IMR-90 (cell line): ENCODE measurements at regions of chr3 and their contacts with region 1.

Region 1: GRCh38 chr3:120417272-120417911 is 33.4 kb downstream of the FSTL1 start:
- DNase-seq: peak; percentile 99
- ATAC-seq: peak; percentile 90
- H3K4me3 ChIP-seq: no peak overlapping the region
- H3K27ac ChIP-seq: peak overlapping the region; percentile 79; the same call in 1 of the 2 replicates
- H3K4me1 ChIP-seq: peaks cover 29% of the 10 kb centered on the region
- H3K27me3 ChIP-seq: no peaks in the 10 kb centered on the region
- CTCF ChIP-seq: peak; percentile 87
- POLR2A ChIP-seq: no peak
- RAD21 ChIP-seq: peak; percentile 66

Region 2: GRCh38 chr3:119891944-119892721 is 525.3 kb before region 1 on chr3:
- CTCF ChIA-PET with region 1: no interaction called
- POLR2A ChIA-PET with region 1: no interaction called
- dilution Hi-C with region 1: no loop called
- in situ Hi-C with region 1: no loop called
- intact Hi-C with region 1: loop called (anchors 1 kb)
- DNase-seq: peak; percentile 71
- ATAC-seq: peak; percentile 70; the same call in 1 of the 2 replicates
- H3K4me3 ChIP-seq: no peak overlapping the region
- H3K27ac ChIP-seq: no peak overlapping the region
- H3K4me1 ChIP-seq: no peaks in the 10 kb centered on the region
- H3K27me3 ChIP-seq: no peaks in the 10 kb centered on the region
- CTCF ChIP-seq: peak; percentile 77
- POLR2A ChIP-seq: no peak
- RAD21 ChIP-seq: peak; percentile 89

Region 3: DNA sequence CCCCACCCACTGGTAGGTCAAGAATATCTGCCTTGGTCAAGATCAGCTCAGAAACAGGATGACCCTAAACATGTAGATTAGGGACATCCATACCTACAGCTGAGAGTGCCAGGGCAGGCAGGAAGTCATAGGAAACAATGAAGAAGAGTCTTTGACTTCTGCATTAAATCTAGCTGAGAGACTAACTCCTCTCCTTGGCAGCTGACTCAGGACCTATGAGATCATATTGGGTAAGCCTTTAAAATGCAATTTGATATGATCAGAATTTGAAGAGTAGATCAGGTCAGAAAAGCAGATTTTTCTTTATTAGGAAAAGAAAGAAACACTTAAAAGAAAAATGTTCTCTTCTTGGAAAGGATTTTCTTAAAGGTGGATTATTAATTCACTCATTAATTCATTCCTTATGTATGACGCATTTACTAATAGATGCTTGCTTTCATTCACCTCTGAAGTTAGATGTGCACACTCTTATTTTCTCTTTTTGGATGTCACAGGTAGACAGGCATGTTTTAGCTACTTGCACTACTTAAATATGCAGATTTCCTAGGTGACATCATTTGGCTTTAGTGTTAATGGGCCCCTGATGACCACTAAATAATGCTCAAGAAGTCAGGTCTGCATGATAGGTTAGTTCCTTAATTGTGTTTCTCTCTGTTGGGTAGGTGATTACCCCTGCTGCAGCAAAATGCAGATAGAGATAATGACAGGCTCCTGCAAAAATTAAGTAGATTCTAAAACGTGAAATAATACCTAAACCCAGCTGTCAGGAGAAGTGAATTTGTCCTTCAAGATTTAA is 287.5 kb before region 1 on chr3:
- CTCF ChIA-PET with region 1: no interaction called
- POLR2A ChIA-PET with region 1: no interaction called
- dilution Hi-C with region 1: no loop called
- in situ Hi-C with region 1: no loop called
- intact Hi-C with region 1: no loop called
- DNase-seq: peak; percentile 57
- ATAC-seq: peak; percentile 48; the same call in 1 of the 2 replicates
- H3K4me3 ChIP-seq: no peak overlapping the region
- H3K27ac ChIP-seq: no peak overlapping the region
- H3K4me1 ChIP-seq: no peaks in the 10 kb centered on the region
- H3K27me3 ChIP-seq: no peaks in the 10 kb centered on the region
- CTCF ChIP-seq: no peak
- POLR2A ChIP-seq: no peak
- RAD21 ChIP-seq: no peak

Region 4: GRCh38 chr3:120245386-120245785 is 172.0 kb before region 1 on chr3:
- CTCF ChIA-PET with region 1: interaction called, 22 read pairs
- POLR2A ChIA-PET with region 1: no interaction called
- dilution Hi-C with region 1: no loop called
- in situ Hi-C with region 1: no loop called
- intact Hi-C with region 1: loop called (anchors 1 kb)
- DNase-seq: no peak
- ATAC-seq: no peak
- H3K4me3 ChIP-seq: no peak overlapping the region
- H3K27ac ChIP-seq: no peak overlapping the region
- H3K4me1 ChIP-seq: no peaks in the 10 kb centered on the region; the same call in 1 of the 2 replicates
- H3K27me3 ChIP-seq: peaks cover 12% of the 10 kb centered on the region
- CTCF ChIP-seq: no peak
- POLR2A ChIP-seq: no peak
- RAD21 ChIP-seq: no peak

Region 5: GRCh38 chr3:120341658-120342346 is 75.6 kb before region 1 on chr3:
- CTCF ChIA-PET with region 1: no interaction called
- POLR2A ChIA-PET with region 1: no interaction called
- dilution Hi-C with region 1: no loop called
- in situ Hi-C with region 1: no loop called
- intact Hi-C with region 1: no loop called
- DNase-seq: no peak
- ATAC-seq: no peak
- H3K4me3 ChIP-seq: no peak overlapping the region
- H3K27ac ChIP-seq: no peak overlapping the region
- H3K4me1 ChIP-seq: no peaks in the 10 kb centered on the region
- H3K27me3 ChIP-seq: no peaks in the 10 kb centered on the region
- CTCF ChIP-seq: no peak
- POLR2A ChIP-seq: no peak
- RAD21 ChIP-seq: no peak